ENCODE measurements at regions of chr2 and their contacts with region 1.

Region 1: GRCh38 chr2:133561045-133561852 is 7.0 kb downstream of the NCKAP5 start:
- DNase-seq: peak; percentile 14
- H3K4me3 Mint-ChIP-seq: no peak overlapping the region
- H3K27ac Mint-ChIP-seq: no peak overlapping the region
- H3K4me1 Mint-ChIP-seq: no peaks in the 10 kb centered on the region
- H3K27me3 Mint-ChIP-seq: no peaks in the 10 kb centered on the region
- CTCF ChIP-seq: peak; percentile 59

Region 2: GRCh38 chr2:133193544-133194361 is 367.5 kb before region 1 on chr2:
- CTCF ChIA-PET with region 1: no interaction called
- POLR2A ChIA-PET with region 1: no interaction called
- intact Hi-C with region 1: loop called (anchors 5 kb)
- DNase-seq: no peak
- H3K4me3 Mint-ChIP-seq: no peak overlapping the region
- H3K27ac Mint-ChIP-seq: no peak overlapping the region
- H3K4me1 Mint-ChIP-seq: no peaks in the 10 kb centered on the region
- H3K27me3 Mint-ChIP-seq: no peaks in the 10 kb centered on the region
- CTCF ChIP-seq: no peak

Region 3: DNA sequence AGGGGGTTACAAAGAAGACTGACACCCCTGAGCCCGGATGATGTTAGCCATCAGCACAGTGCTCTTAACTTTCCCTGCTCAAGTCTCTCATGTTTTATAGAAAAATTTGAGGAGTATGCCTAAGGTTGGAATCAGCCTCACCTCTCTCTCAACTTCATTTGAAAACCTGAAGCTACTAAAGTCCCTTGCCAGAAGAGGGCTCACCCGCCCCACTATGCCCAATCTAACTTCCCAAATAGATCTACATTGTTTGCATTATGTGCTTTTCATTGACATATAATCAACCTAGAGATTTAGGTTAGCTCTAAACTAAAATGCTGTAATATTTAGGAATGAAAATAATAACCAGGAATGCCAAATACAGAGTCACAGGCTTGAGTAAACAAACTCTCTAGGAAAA is 298.4 kb before region 1 on chr2:
- CTCF ChIA-PET with region 1: interaction called, 71 read pairs
- POLR2A ChIA-PET with region 1: no interaction called
- intact Hi-C with region 1: loop called (anchors 1 kb)
- DNase-seq: no peak
- H3K4me3 Mint-ChIP-seq: no peak overlapping the region
- H3K27ac Mint-ChIP-seq: no peak overlapping the region
- H3K4me1 Mint-ChIP-seq: no peaks in the 10 kb centered on the region
- H3K27me3 Mint-ChIP-seq: peaks cover 11% of the 10 kb centered on the region
- CTCF ChIP-seq: peak; percentile 35

Region 4: DNA sequence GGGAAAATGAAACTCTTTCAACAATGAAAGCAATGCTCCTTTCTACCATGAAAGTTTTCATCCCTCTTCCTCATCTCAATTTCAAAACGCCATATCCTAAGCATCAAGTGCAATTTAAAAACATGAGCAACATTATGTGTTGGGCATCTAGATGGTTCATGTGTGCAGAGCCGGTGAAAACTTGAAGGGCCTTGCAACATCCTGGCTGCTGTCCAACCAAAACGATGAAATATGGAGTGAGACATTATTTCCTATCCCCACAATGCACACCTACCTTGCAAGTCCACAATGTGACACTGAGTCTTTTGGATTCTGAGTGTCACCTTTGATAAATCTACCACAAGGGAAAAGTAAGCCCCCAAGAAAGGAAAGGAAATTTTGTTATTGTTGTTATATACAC is 103.0 kb before region 1 on chr2:
- CTCF ChIA-PET with region 1: no interaction called
- POLR2A ChIA-PET with region 1: no interaction called
- intact Hi-C with region 1: no loop called
- DNase-seq: peak; percentile 30
- H3K4me3 Mint-ChIP-seq: no peak overlapping the region
- H3K27ac Mint-ChIP-seq: no peak overlapping the region
- H3K4me1 Mint-ChIP-seq: peaks cover 19% of the 10 kb centered on the region
- H3K27me3 Mint-ChIP-seq: no peaks in the 10 kb centered on the region
- CTCF ChIP-seq: no peak